PC-9 (cell line): ENCODE measurements at regions of chr11 and their contacts with region 1.

Region 1: DNA sequence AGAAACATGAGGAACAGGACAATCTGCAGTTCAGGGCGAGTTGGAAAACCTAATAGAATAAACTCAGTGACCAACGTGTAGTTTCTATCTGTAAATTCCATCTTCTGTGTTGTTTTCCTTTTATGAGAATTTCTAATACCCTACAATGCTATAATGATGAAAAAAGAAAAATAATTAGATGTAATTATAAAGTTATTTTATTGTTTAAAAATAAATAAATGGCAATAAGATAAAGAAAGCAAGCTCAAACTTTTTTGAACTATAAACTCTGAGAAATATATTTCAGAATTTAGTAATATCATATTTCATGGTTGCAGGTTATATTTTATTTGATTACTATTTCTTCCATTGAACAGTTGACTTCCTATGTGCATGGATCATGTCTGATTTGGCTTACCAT is at the start of gene OR5I1:
- DNase-seq: no peak
- H3K4me3 ChIP-seq: no peak within 1 kb of the TSS
- H3K27ac ChIP-seq: no peak within 1 kb of the TSS
- H3K4me1 ChIP-seq: no peaks in the 10 kb centered on the region
- H3K27me3 ChIP-seq: no peaks in the 10 kb centered on the region
- CTCF ChIP-seq: no peak
- total RNA-seq, gene OR5I1: not detected in 2 replicates

Region 2: DNA sequence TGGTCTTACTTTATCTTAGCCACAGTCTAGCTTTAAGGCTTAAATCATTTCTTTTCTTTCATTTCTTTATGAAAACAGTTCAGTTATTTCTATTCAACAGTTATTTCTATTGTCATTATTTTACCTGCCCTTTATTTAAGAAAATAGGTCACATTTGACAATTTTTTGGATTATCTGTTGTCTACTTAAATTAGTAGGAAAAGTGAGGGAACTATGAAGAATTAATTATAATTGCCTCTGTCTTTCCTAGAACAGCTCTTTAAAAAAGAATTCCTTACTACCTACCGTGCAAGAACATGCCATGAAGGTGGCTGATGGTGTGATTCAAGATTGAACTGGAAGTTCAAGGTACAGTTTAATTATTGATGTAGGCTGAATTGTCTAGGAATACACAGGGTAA is 274.4 kb before region 1 on chr11 and contains the start of gene OR4C6:
- CTCF ChIA-PET with region 1: no interaction called
- POLR2A ChIA-PET with region 1: no interaction called
- intact Hi-C with region 1: no loop called
- DNase-seq: no peak
- H3K4me3 ChIP-seq: no peak within 1 kb of the TSS
- H3K27ac ChIP-seq: no peak within 1 kb of the TSS
- H3K4me1 ChIP-seq: no peaks in the 10 kb centered on the region
- H3K27me3 ChIP-seq: no peaks in the 10 kb centered on the region
- CTCF ChIP-seq: no peak
- total RNA-seq, gene OR4C6: not detected in 2 replicates

Region 3: GRCh38 chr11:55956521-55956920 is 20.2 kb after region 1 on chr11:
- CTCF ChIA-PET with region 1: no interaction called
- POLR2A ChIA-PET with region 1: no interaction called
- intact Hi-C with region 1: loop called (anchors 1 kb)
- DNase-seq: no peak
- H3K4me3 ChIP-seq: no peak overlapping the region
- H3K27ac ChIP-seq: no peak overlapping the region
- H3K4me1 ChIP-seq: no peaks in the 10 kb centered on the region
- H3K27me3 ChIP-seq: no peaks in the 10 kb centered on the region
- CTCF ChIP-seq: no peak